Activated CD8-positive, alpha-beta T cell treated with anti-CD3 and anti-CD28 coated beads, Interleukin-2, amount 10 ng/mL, durations not matched to agents 7 days and 5 days (primary cell): ENCODE measurements at regions of chr10 and their contacts with region 1.

Region 1: GRCh38 chr10:102394079-102394800 is 1.3 kb upstream of the NFKB2 start:
- DNase-seq: peak; percentile 98
- ATAC-seq: peak; percentile 89
- H3K4me3 Mint-ChIP-seq: peak overlapping the region; percentile 85
- H3K27ac Mint-ChIP-seq: peak overlapping the region; percentile 95
- H3K4me1 Mint-ChIP-seq: peaks cover 35% of the 10 kb centered on the region
- H3K27me3 Mint-ChIP-seq: no peaks in the 10 kb centered on the region

Region 2: GRCh38 chr10:102384053-102384452 is 10.2 kb before region 1 on chr10:
- CTCF ChIA-PET with region 1: interaction called, 34 read pairs
- POLR2A ChIA-PET with region 1: interaction called, 23 read pairs
- DNase-seq: no peak
- ATAC-seq: no peak
- H3K4me3 Mint-ChIP-seq: no peak overlapping the region
- H3K27ac Mint-ChIP-seq: no peak overlapping the region
- H3K4me1 Mint-ChIP-seq: no peaks in the 10 kb centered on the region
- H3K27me3 Mint-ChIP-seq: no peaks in the 10 kb centered on the region

Region 3: DNA sequence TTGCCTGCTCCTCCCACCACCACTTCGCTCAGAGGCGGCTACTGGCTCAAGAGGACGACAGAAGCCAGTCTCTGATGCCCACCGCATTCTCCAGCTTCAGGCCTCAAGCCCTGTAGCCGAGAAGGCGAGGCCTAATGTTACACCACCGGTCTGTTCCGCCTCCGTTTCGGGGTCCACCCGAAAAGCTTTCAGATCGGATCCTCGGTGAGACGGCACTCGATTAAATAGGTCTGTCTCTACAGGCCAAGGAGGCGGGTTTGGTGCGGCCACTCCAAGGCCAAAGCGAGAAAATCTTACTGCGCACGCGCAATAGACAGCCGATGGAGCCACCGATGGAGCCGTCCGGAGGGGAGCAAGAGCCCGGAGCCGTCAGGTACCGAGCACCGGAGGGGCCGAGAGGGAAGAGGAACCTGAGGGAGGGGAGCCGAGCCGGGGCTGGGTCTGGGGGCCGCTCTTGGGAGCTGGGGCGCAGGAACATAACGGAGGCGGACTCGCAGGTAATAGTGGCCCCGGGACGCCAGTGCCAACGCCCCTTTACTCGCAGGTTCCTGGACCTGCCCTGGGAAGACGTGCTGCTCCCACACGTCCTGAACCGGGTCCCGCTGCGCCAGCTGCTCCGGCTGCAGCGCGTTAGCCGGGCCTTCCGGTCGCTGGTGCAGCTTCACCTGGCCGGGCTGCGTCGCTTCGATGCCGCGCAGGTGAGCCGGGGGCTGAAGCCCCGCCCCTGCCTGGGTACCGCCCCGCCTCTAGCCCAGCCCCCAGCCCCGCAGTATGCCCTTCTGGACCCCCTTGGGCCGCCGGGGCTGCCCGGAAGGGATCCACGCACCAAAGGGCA is 26.8 kb after region 1 on chr10 and contains the start of gene FBXL15:
- CTCF ChIA-PET with region 1: interaction called, 39 read pairs
- POLR2A ChIA-PET with region 1: interaction called, 68 read pairs
- DNase-seq: peak; percentile 97
- ATAC-seq: peak; percentile 81
- H3K4me3 Mint-ChIP-seq: peak within 1 kb of the TSS; percentile 94
- H3K27ac Mint-ChIP-seq: peak within 1 kb of the TSS; percentile 93
- H3K4me1 Mint-ChIP-seq: peaks cover 42% of the 10 kb centered on the region
- H3K27me3 Mint-ChIP-seq: peaks cover 14% of the 10 kb centered on the region
- total RNA-seq, gene FBXL15: 12.7 to 13.8 TPM

Region 4: GRCh38 chr10:102450194-102450938 is 56.1 kb after region 1 on chr10:
- CTCF ChIA-PET with region 1: interaction called, 20 read pairs
- POLR2A ChIA-PET with region 1: interaction called, 7 read pairs
- DNase-seq: peak; percentile 93
- ATAC-seq: peak; percentile 85
- H3K4me3 Mint-ChIP-seq: peak overlapping the region; percentile 90
- H3K27ac Mint-ChIP-seq: peak overlapping the region; percentile 93
- H3K4me1 Mint-ChIP-seq: peaks cover 47% of the 10 kb centered on the region
- H3K27me3 Mint-ChIP-seq: no peaks in the 10 kb centered on the region

Region 5: DNA sequence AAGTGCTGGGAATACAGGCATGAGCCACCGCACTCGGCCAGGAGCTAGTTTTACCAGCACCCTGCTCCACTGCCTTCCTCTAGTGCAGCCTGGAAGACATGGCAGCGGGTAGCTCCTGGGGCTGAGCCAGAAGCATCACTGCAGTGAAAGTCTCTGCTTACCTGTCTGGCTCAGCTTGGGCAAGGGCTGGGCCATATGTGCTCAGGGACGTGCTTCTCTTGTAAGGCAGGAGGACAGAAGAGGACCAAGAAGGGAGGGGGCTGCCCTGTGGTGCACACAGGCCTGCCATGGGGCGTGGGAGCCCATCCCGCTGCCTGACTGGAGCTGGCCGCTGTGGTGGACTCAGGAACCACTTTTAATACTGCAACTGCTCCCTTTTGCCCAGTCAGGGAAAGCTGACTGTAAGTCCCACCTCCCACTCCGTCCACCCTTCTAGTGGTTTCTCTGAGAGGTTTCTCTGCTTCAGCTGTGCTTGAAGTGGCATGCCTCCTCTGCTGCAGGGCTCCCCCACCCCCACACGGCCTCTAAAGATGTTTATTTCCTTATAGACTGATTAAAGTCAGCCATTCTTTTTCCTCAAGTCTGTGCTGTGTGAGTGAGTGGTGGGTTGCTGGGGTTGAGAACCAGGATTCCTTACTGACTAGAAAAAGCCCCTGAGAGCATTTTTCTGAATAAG is 82.4 kb after region 1 on chr10:
- CTCF ChIA-PET with region 1: interaction called, 24 read pairs
- POLR2A ChIA-PET with region 1: interaction called, 10 read pairs
- DNase-seq: peak; percentile 33
- ATAC-seq: no peak
- H3K4me3 Mint-ChIP-seq: no peak overlapping the region
- H3K27ac Mint-ChIP-seq: peak overlapping the region; percentile 72
- H3K4me1 Mint-ChIP-seq: peaks cover 29% of the 10 kb centered on the region
- H3K27me3 Mint-ChIP-seq: no peaks in the 10 kb centered on the region

Region 6: DNA sequence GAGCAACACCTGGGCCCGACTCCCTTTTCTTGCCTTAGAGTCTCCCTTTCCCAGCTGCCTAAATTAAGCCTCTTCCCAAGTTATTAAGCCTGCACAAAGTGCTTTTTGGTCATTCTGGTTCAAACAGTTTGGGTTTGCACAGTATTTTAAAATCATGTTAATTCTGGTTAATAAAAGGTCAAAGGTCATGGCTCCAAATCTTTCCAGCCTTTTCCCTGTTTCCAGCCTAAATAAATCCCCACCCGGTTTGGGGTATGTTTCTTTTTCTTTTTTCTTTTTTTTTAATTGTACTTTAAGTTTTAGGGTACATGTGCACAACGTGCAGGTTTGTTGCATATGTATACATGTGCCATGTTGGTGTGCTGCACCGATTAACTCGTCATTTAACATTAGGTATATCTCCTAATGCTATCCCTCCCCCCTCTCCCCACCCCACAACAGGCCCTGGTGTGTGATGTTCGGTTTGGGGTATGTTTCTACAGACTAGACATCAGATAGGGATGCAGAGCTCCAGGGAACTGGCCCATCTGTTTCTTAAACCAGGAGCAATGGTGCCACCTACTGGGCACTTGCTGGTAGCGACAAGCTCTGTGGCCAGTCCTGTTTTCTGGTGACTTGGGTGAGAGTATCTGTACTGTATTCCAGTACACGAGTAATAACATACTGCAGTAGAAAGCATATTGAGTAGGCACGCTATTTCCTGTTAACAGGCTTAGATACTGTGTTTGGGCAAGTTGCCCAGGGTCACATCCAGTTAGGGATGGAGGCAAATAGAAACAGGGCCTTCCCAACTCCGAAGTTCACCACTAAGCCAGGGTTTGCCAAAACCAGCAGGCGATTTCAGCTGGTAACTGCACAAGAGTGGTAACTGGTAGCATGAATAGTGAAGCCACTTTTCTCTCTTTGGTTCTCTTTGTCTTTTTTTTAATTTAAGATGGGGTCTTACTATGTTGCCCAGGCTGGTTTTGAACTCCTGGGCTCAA is 189.5 kb after region 1 on chr10:
- CTCF ChIA-PET with region 1: interaction called, 18 read pairs
- POLR2A ChIA-PET with region 1: interaction called, 8 read pairs
- DNase-seq: peak; percentile 90
- ATAC-seq: peak; percentile 99
- H3K4me3 Mint-ChIP-seq: no peak overlapping the region
- H3K27ac Mint-ChIP-seq: peak overlapping the region; percentile 20
- H3K4me1 Mint-ChIP-seq: no peaks in the 10 kb centered on the region
- H3K27me3 Mint-ChIP-seq: no peaks in the 10 kb centered on the region